CD8-positive, alpha-beta T cell (primary cell): ENCODE measurements at regions of chr1 and their contacts with region 1.

Region 1: GRCh38 chr1:37682334-37682987 is 9.9 kb upstream of the CDCA8 start:
- DNase-seq: peak; percentile 58 to 85 (median 76)
- ATAC-seq: peak; percentile 95
- H3K4me3 ChIP-seq: no peak overlapping the region
- H3K4me3 Mint-ChIP-seq: no peak overlapping the region
- H3K27ac ChIP-seq: no peak overlapping the region
- H3K27ac Mint-ChIP-seq: peak overlapping the region; percentile 74
- H3K4me1 ChIP-seq: peaks cover 3% of the 10 kb centered on the region
- H3K4me1 Mint-ChIP-seq: peaks cover 3% of the 10 kb centered on the region
- H3K27me3 ChIP-seq: no peaks in the 10 kb centered on the region
- H3K27me3 Mint-ChIP-seq: no peaks in the 10 kb centered on the region
- CTCF ChIP-seq: peak; percentile 89

Region 2: GRCh38 chr1:36553591-36554322 is 1128.7 kb before region 1 on chr1:
- CTCF ChIA-PET with region 1: no interaction called
- POLR2A ChIA-PET with region 1: no interaction called
- intact Hi-C with region 1: loop called in 1 of 2 experiments (anchors 5 kb)
- DNase-seq: peak; percentile 28 to 72 (median 63)
- ATAC-seq: peak; percentile 46
- H3K4me3 ChIP-seq: no peak overlapping the region
- H3K4me3 Mint-ChIP-seq: no peak overlapping the region
- H3K27ac ChIP-seq: no peak overlapping the region
- H3K27ac Mint-ChIP-seq: no peak overlapping the region
- H3K4me1 ChIP-seq: no peaks in the 10 kb centered on the region
- H3K4me1 Mint-ChIP-seq: no peaks in the 10 kb centered on the region
- H3K27me3 ChIP-seq: peaks cover 0 to 6% of the 10 kb centered on the region in 2 experiments
- H3K27me3 Mint-ChIP-seq: peaks cover 51% of the 10 kb centered on the region
- CTCF ChIP-seq: peak; percentile 47

Region 3: DNA sequence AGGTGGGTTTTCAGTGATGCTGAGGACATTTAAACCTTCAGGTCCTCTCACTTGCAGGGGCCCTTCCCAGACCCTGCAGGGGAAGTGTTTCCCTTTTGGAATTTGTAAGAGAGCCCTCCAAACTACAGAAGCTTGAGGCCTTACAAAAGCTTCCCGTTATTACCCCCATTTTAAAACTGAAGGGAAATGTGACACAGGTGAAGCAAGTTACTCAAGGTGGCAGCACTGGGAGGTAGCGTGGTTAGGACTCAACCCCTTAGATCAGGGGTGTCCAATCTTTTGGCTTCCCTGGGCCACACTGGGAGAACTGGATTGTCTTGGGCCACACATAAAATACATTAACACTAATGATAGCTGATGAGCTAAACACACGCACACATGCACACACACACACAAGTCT is 223.9 kb before region 1 on chr1:
- CTCF ChIA-PET with region 1: interaction called, 13 read pairs
- POLR2A ChIA-PET with region 1: no interaction called
- intact Hi-C with region 1: loop called in 1 of 2 experiments (anchors 1 kb)
- DNase-seq: peak in 2 of 9 experiments; percentile 31 to 45
- ATAC-seq: no peak
- H3K4me3 ChIP-seq: no peak overlapping the region
- H3K4me3 Mint-ChIP-seq: no peak overlapping the region
- H3K27ac ChIP-seq: no peak overlapping the region
- H3K27ac Mint-ChIP-seq: no peak overlapping the region
- H3K4me1 ChIP-seq: no peaks in the 10 kb centered on the region
- H3K4me1 Mint-ChIP-seq: peaks cover 9% of the 10 kb centered on the region
- H3K27me3 ChIP-seq: no peaks in the 10 kb centered on the region
- H3K27me3 Mint-ChIP-seq: no peaks in the 10 kb centered on the region
- CTCF ChIP-seq: no peak

Region 4: DNA sequence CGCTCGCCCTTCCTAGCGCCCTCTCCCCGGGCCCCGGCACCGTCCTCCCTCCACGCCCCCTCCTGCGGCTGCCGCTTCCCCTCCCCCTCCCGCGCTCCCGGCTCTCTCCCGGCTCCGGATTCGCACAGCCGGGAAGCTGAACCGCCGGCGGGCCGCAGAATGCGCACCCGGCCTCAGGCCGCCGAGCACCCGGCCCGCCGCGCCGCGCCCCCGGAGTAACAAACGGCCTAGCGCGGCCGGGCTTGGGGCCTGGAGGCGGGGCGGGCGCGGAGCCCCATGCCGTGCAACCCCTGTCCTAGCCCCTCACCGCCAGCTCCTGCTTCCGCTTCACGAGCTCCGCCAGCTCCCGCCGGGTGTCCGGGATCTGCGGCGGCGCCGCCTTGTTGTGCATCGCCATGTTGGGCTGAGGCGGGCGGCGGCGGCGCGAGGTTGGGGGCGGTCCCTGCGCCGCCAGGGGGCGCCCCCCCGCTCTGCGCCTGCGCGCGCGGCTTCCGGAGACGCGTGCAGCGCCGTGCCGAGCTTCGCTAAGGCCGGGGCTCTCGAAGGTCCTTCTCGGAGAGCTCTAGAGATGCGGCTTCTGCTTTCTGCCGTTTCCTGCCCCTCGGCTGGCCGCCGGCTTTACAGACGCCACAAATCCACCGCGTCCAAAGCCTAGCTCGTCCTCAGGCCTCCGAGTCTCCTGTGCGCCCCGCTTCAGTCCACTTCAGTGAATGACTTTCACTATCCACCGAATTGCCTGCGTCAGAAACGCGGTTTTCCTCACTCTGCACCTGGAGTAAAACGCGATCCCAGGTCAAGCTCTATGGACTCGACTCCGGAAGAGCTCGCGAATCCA is 167.9 kb before region 1 on chr1 and contains the start of gene MEAF6:
- CTCF ChIA-PET with region 1: interaction called, 5 read pairs
- POLR2A ChIA-PET with region 1: no interaction called
- intact Hi-C with region 1: loop called in 1 of 2 experiments (anchors 2 kb)
- DNase-seq: peak; percentile 68 to 92 (median 83)
- ATAC-seq: peak; percentile 94
- H3K4me3 ChIP-seq: peak within 1 kb of the TSS; percentile 59 to 67
- H3K4me3 Mint-ChIP-seq: peak within 1 kb of the TSS; percentile 97
- H3K27ac ChIP-seq: peak within 1 kb of the TSS; percentile 78 to 79
- H3K27ac Mint-ChIP-seq: peak within 1 kb of the TSS; percentile 97
- H3K4me1 ChIP-seq: peaks cover 30% of the 10 kb centered on the region
- H3K4me1 Mint-ChIP-seq: peaks cover 44% of the 10 kb centered on the region
- H3K27me3 ChIP-seq: no peaks in the 10 kb centered on the region
- H3K27me3 Mint-ChIP-seq: no peaks in the 10 kb centered on the region
- CTCF ChIP-seq: peak; percentile 72
- total RNA-seq, gene MEAF6: 43.4 to 46.0 TPM

Region 5: GRCh38 chr1:37602750-37603694 is 79.4 kb before region 1 on chr1:
- CTCF ChIA-PET with region 1: interaction called, 227 read pairs
- POLR2A ChIA-PET with region 1: interaction called, 4 read pairs
- intact Hi-C with region 1: loop called (anchors 1 kb)
- DNase-seq: peak in 7 of 9 experiments; percentile 10 to 64 (median 39)
- ATAC-seq: peak; percentile 75
- H3K4me3 ChIP-seq: no peak overlapping the region
- H3K4me3 Mint-ChIP-seq: no peak overlapping the region
- H3K27ac ChIP-seq: no peak overlapping the region
- H3K27ac Mint-ChIP-seq: no peak overlapping the region
- H3K4me1 ChIP-seq: no peaks in the 10 kb centered on the region
- H3K4me1 Mint-ChIP-seq: no peaks in the 10 kb centered on the region
- H3K27me3 ChIP-seq: peaks cover 0 to 2% of the 10 kb centered on the region in 2 experiments
- H3K27me3 Mint-ChIP-seq: peaks cover 7% of the 10 kb centered on the region
- CTCF ChIP-seq: peak; percentile 80

Region 6: DNA sequence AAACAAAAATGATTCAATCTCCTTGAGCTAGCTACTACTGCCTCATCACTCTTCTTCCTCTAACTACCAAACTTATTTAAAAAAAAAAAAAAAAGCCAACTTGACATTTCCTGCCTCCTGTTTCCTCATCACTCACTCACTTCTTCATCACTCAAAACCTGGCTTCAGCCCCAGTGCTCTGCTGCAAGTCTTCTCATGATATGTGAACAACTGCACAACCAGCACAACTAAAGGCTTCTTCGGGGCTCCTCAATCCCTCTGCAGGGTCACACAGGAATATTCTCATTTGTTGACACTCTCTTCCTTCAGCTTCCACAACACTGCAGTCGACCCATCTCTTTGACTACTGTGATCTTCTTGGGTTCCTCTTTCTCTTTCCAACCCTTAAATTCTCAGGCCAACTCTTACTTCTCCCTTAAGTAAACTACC is 169.3 kb after region 1 on chr1:
- CTCF ChIA-PET with region 1: no interaction called
- POLR2A ChIA-PET with region 1: no interaction called
- intact Hi-C with region 1: no loop called
- DNase-seq: no peak
- ATAC-seq: no peak
- H3K4me3 ChIP-seq: no peak overlapping the region
- H3K4me3 Mint-ChIP-seq: no peak overlapping the region
- H3K27ac ChIP-seq: peak overlapping the region in 1 of 2 experiments; percentile 49
- H3K27ac Mint-ChIP-seq: no peak overlapping the region
- H3K4me1 ChIP-seq: peaks cover 54% of the 10 kb centered on the region
- H3K4me1 Mint-ChIP-seq: peaks cover 51% of the 10 kb centered on the region
- H3K27me3 ChIP-seq: no peaks in the 10 kb centered on the region
- H3K27me3 Mint-ChIP-seq: no peaks in the 10 kb centered on the region
- CTCF ChIP-seq: no peak